Activated CD4-positive, alpha-beta T cell treated with anti-CD3 and anti-CD28 coated beads, Interleukin-2, amount 10 ng/mL, durations not matched to agents 24 days and 14 days (primary cell): ENCODE measurements at regions of chr10 and their contacts with region 1.

Region 1: GRCh38 chr10:130179640-130180039 is 43.4 kb downstream of the GLRX3 start:
- DNase-seq: peak; percentile 86
- H3K4me3 Mint-ChIP-seq: no peak overlapping the region
- H3K27ac Mint-ChIP-seq: no peak overlapping the region
- H3K4me1 Mint-ChIP-seq: peaks cover 13% of the 10 kb centered on the region
- H3K27me3 Mint-ChIP-seq: no peaks in the 10 kb centered on the region

Region 2: DNA sequence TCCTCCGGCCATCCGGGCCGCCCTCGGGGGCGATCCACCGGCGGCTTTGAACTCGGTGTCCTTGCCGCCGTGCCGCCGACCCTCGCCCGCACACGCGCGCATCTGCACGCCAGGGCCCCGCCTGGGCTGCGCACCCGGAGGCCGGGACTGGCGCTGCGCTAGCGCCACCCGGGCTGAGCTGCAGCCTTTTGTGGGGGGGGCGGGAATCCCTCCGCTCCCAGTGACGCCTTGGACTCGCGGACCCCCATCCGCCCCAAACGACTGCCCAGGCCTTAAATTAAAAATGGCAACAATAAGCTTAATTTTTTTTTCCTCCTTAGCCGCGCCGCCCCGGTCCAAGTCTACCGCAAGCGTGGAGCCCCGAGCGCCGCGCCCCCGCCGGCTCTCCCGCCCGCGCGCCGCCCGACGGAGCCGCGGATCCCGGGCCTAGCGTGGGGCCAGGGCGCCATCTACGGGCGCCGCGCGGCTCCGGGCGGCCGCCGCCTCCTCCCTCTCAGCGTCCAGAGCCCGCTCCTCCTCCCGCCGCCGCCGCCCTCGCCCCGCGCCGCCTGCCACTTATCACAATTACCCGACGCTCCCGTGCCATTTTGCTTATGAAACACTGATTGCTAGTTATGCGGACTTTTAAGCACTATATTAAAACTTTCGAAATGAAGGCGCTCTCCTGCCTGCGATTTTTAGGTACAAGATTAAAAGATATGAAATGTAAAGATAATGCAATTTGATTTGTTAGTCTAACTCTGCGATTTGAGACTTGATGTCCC is 208.1 kb before region 1 on chr10:
- intact Hi-C with region 1: loop called (anchors 5 kb)
- DNase-seq: no peak
- H3K4me3 Mint-ChIP-seq: peak overlapping the region; percentile 45
- H3K27ac Mint-ChIP-seq: peak overlapping the region; percentile 75
- H3K4me1 Mint-ChIP-seq: peaks cover 8% of the 10 kb centered on the region
- H3K27me3 Mint-ChIP-seq: peaks cover 62% of the 10 kb centered on the region

Region 3: DNA sequence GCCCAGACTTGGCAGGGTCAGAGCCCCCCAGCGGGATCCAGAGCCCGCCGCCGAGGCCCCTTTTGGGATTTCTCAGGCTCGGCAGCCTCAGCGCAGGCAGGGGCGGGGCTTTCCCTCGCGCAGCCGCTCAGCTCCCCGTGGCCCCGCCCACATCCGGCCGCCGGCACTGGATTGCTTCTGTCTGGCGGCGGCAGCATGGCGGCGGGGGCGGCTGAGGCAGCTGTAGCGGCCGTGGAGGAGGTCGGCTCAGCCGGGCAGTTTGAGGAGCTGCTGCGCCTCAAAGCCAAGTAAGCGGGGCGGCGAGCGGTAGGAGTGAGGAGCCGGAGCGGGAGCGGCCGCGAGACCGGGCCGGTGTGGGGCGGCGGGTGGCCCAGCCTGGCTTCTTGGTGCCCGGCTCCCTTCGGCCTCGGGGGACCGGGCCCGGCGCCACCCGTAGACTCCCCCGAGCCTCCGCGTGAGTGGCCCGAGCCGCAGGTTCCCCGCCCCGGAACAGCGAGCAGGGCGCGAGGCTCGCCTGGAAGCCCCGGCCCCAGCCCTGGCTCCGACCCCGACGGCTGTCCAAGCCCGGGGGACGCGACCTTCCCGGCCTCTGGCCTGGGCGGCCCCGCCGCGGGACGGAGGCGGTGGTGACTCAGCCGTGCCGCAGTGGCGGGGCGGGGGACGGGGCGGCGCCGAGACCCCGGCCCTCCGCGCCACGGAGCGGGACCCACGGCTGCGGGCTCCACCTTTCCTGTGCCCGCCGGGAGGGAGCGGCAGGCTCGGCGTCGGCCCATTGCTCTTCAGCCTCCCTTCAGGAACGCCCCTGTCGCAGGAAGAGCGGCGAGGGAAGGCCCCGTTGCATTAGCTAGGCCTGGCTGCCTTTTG is 43.2 kb before region 1 on chr10 and contains the start of gene GLRX3:
- intact Hi-C with region 1: loop called (anchors 2 kb)
- DNase-seq: peak; percentile 97
- H3K4me3 Mint-ChIP-seq: peak within 1 kb of the TSS; percentile 94
- H3K27ac Mint-ChIP-seq: peak within 1 kb of the TSS; percentile 95
- H3K4me1 Mint-ChIP-seq: peaks cover 36% of the 10 kb centered on the region
- H3K27me3 Mint-ChIP-seq: peaks cover 14% of the 10 kb centered on the region
- total RNA-seq, gene GLRX3: 136 and 149 TPM in 2 replicates